ENCODE measurements at regions of chr1 and their contacts with region 1.

Region 1: DNA sequence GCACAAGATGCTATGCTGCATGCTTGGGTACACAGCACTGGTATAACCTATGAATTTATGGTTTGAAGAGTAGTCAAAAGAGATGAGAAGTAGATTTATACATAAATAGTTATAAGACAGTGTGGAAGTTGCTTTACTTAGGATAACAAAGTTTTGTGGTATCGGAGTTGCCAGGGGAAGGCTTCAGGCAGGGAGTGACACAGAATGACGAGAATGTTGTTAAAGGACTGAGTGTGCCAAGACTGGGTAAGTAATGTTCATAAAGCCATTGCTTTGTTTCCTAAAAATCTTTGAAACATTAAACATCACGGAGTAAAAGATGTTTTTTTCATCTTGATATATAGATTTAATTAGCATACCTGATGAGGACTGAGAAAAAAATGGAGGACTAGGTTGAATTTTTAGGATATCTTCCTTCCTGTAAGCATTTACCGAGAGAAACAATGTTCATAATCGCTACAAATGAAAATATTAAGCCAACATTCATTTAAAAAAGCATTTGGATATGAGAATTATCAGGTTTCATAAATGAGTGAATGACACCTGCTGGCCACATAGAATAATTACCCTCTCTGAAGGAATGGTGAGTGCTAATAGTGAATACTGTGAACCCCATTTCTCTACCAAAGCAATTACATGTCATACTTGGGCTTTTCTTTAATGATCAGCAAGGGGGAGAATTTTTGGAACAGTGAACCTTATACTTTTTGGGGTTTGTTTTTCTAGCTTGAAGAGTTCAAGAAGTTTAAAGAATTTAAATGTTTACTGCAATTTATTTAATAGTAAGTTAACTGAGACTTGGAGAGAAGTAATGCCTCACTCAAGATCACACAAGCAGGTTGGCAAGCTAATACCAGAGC is 28.4 kb downstream of the EXTL2 start:
- DNase-seq: no peak
- ATAC-seq: peak; percentile 87
- H3K4me3 ChIP-seq: no peak overlapping the region
- H3K27ac ChIP-seq: no peak overlapping the region
- H3K4me1 ChIP-seq: peaks cover 9% of the 10 kb centered on the region; the same call in 1 of the 2 replicates
- H3K27me3 ChIP-seq: no peaks in the 10 kb centered on the region
- CTCF ChIP-seq: peak; percentile 35 to 64 (median 53); a peak in 5 of 6 replicates
- EP300 ChIP-seq: no peak
- POLR2A ChIP-seq: no peak
- RAD21 ChIP-seq: peak; percentile 68

Region 2: DNA sequence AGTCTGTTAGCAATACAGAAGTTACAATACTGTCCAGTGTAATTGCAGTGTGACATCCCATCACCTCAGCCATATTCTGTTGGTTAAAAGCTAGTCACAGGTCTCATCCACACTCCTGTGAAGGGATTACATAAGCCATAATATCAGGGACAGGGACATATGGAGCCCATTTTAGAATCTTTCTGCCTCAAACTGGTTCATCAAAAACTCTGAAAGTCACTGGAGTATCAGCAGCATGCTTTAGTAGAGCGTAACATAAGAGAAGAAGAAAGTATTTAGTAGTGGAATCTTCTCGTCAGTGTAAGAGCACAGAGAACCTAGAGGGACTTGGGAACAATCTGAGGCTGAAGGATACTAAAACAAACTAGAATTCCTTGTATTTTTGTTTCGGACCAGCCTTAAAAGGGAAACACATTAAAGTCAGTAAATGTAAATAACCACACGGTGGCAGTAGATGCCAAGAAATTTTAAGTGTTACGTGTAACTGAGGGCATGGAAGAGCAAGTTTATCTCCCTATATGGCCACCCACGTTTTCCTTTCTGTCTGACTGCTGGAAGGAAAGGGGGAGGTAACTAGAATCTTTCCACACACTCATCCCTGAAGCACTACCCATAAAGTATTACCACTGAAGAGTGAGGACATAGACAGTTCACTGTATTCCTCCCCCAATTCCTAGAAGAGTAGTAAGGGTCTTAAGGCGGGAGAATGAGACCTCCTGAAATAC is 1057.7 kb before region 1 on chr1:
- CTCF ChIA-PET with region 1: interaction called, 17 read pairs
- POLR2A ChIA-PET with region 1: no interaction called
- RAD21 ChIA-PET with region 1: interaction called, 7 read pairs
- SMC1A ChIA-PET with region 1: interaction called, 11 read pairs
- in situ Hi-C with region 1: loop called (anchors 5 kb)
- intact Hi-C with region 1: loop called (anchors 2 kb)
- DNase-seq: peak; percentile 79
- ATAC-seq: peak; percentile 96
- H3K4me3 ChIP-seq: no peak overlapping the region
- H3K27ac ChIP-seq: peak overlapping the region; percentile 67
- H3K4me1 ChIP-seq: peaks cover 10% of the 10 kb centered on the region
- H3K27me3 ChIP-seq: no peaks in the 10 kb centered on the region
- CTCF ChIP-seq: peak; percentile 24 to 72 (median 55); a peak in 5 of 6 replicates
- EP300 ChIP-seq: no peak
- POLR2A ChIP-seq: no peak
- RAD21 ChIP-seq: peak; percentile 85

Region 3: DNA sequence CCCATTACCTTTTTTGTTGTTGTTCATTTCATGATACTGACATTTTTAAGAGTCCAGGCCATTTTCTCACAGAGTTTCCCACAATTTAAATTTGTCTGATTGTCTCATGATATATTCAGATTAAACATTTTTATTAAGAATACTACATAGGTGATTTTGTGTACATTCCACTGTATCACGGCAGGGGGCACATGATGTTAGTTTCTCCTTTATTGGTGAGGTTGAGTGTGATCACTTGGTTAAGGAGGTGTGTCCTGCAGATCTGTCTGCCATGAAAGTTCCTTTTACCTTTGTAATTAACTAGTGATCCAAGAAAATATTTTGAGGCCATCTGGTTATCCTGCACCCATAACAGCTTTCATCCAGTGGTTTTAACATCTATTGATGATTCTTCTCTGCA is 588.4 kb before region 1 on chr1:
- CTCF ChIA-PET with region 1: no interaction called
- POLR2A ChIA-PET with region 1: no interaction called
- RAD21 ChIA-PET with region 1: no interaction called
- SMC1A ChIA-PET with region 1: no interaction called
- in situ Hi-C with region 1: loop called (anchors 10 kb)
- intact Hi-C with region 1: loop called (anchors 5 kb)
- DNase-seq: no peak
- ATAC-seq: peak; percentile 88
- H3K4me3 ChIP-seq: no peak overlapping the region
- H3K27ac ChIP-seq: no peak overlapping the region
- H3K4me1 ChIP-seq: no peaks in the 10 kb centered on the region
- H3K27me3 ChIP-seq: no peaks in the 10 kb centered on the region
- CTCF ChIP-seq: peak; percentile 25 to 28 (median 26); a peak in 2 of 6 replicates
- EP300 ChIP-seq: no peak
- POLR2A ChIP-seq: no peak
- RAD21 ChIP-seq: peak; percentile 46

Region 4: GRCh38 chr1:100502052-100502783 is 364.1 kb before region 1 on chr1:
- CTCF ChIA-PET with region 1: interaction called, 10 read pairs
- POLR2A ChIA-PET with region 1: no interaction called
- RAD21 ChIA-PET with region 1: no interaction called
- SMC1A ChIA-PET with region 1: interaction called, 3 read pairs
- in situ Hi-C with region 1: no loop called
- intact Hi-C with region 1: no loop called
- DNase-seq: no peak
- ATAC-seq: no peak
- H3K4me3 ChIP-seq: no peak overlapping the region
- H3K27ac ChIP-seq: no peak overlapping the region
- H3K4me1 ChIP-seq: no peaks in the 10 kb centered on the region
- H3K27me3 ChIP-seq: no peaks in the 10 kb centered on the region
- CTCF ChIP-seq: no peak
- EP300 ChIP-seq: no peak
- POLR2A ChIP-seq: no peak
- RAD21 ChIP-seq: no peak

Region 5: GRCh38 chr1:100606438-100606837 is 259.8 kb before region 1 on chr1:
- CTCF ChIA-PET with region 1: interaction called, 32 read pairs
- POLR2A ChIA-PET with region 1: no interaction called
- RAD21 ChIA-PET with region 1: interaction called, 23 read pairs
- SMC1A ChIA-PET with region 1: interaction called, 18 read pairs
- in situ Hi-C with region 1: no loop called
- intact Hi-C with region 1: loop called (anchors 1 kb)
- DNase-seq: no peak
- ATAC-seq: peak; percentile 73
- H3K4me3 ChIP-seq: no peak overlapping the region
- H3K27ac ChIP-seq: no peak overlapping the region
- H3K4me1 ChIP-seq: no peaks in the 10 kb centered on the region
- H3K27me3 ChIP-seq: no peaks in the 10 kb centered on the region; a peak in 1 of 4 replicates
- CTCF ChIP-seq: peak; percentile 31 to 69 (median 40); a peak in 3 of 6 replicates
- EP300 ChIP-seq: no peak
- POLR2A ChIP-seq: no peak
- RAD21 ChIP-seq: peak; percentile 74

Region 6: GRCh38 chr1:100834777-100835660 is 31.3 kb before region 1 on chr1:
- CTCF ChIA-PET with region 1: interaction called, 7 read pairs
- POLR2A ChIA-PET with region 1: no interaction called
- RAD21 ChIA-PET with region 1: no interaction called
- SMC1A ChIA-PET with region 1: interaction called, 9 read pairs
- in situ Hi-C with region 1: no loop called
- intact Hi-C with region 1: loop called (anchors 1 kb)
- DNase-seq: no peak
- ATAC-seq: peak; percentile 84
- H3K4me3 ChIP-seq: no peak overlapping the region
- H3K27ac ChIP-seq: no peak overlapping the region
- H3K4me1 ChIP-seq: no peaks in the 10 kb centered on the region
- H3K27me3 ChIP-seq: no peaks in the 10 kb centered on the region
- CTCF ChIP-seq: peak; percentile 35 to 56 (median 55); a peak in 5 of 6 replicates
- EP300 ChIP-seq: no peak
- POLR2A ChIP-seq: no peak
- RAD21 ChIP-seq: peak; percentile 52

Region 7: DNA sequence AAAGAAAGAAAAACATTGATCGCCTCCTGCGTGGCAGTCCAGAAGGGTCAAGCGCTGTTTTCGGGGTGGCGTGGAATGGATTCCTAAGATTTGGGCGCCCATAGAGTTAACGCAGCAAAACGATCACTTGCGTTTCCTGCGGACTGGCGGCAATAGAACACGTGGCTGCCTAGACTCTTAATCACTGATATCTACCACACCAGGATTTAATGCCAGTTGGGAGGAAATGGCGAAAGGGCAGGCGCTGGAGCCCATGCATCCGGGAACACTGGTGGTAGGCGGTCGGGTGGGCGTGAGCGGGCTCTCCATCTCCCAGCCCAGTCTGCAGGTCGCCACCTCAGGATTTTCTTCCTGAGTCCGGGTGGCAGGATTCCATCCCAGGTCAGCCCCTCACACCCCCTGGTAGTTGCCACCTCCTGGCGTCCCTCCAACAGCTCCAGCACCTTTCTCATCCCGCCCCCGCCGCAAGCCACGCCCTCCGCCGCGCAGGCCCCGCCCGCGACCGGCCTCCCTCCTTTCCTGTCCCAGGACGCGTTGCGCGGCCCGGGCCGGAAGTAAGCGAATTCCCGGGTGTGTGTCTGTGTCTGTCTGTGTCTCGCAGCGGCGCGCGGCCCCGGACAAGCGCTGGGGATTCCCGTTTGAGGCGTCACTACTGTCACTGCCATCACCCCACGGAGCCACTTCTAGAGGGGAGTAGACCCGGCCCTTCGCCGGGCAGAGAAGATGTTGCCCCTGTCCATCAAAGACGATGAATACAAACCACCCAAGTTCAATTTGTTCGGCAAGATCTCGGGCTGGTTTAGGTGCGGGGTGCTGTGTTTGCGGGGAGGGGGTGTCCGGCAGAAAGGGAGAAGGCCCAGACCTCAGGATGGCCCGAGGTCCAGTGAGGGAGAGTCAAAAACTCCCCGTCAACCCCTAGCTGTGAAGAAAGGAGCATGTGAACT is 29.5 kb after region 1 on chr1 and contains the start of gene SLC30A7:
- CTCF ChIA-PET with region 1: interaction called, 16 read pairs
- POLR2A ChIA-PET with region 1: no interaction called
- RAD21 ChIA-PET with region 1: interaction called, 4 read pairs
- SMC1A ChIA-PET with region 1: interaction called, 14 read pairs
- in situ Hi-C with region 1: no loop called
- intact Hi-C with region 1: no loop called
- DNase-seq: peak; percentile 57
- ATAC-seq: peak; percentile 87
- H3K4me3 ChIP-seq: peak within 1 kb of the TSS; percentile 89
- H3K27ac ChIP-seq: peak within 1 kb of the TSS; percentile 93
- H3K4me1 ChIP-seq: peaks cover 8% of the 10 kb centered on the region; the same call in 1 of the 2 replicates
- H3K27me3 ChIP-seq: no peaks in the 10 kb centered on the region
- CTCF ChIP-seq: no peak
- EP300 ChIP-seq: 0 out of 4 replicates have a peak, but pooled peaks of 1 of the 2 experiments have one; percentile 12
- POLR2A ChIP-seq: peak; percentile 84
- RAD21 ChIP-seq: no peak
- polyA plus RNA-seq, gene SLC30A7: 4.4 to 9.4 TPM

Measured in GM12878 (cell line).